Ascending aorta (tissue), 2 donors: ENCODE measurements at regions of chr11 and their contacts with region 1.

Region 1: DNA sequence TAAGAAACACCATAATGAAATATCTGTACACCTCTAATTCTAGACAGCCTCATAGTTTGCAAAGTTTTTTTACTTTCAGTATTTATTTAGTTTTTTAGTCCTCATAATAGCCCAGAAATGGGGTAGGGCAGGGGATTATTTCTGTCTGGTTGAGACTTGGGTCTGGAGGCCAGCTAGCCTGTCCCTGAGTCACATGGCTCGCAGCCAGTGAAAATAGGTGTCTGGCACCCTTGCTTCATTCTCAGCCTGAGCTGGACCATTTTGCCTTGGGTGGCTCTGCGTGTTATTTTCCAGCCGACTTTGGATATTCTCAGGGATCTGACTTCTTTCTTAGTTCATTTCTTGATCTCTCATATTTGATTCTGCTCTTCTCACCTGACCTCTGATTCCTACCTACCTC is 123.9 kb upstream of the NARS2 start:
- DNase-seq: peak; percentile 71 to 95
- H3K4me3 ChIP-seq: no peak overlapping the region
- H3K27ac ChIP-seq: peak overlapping the region; percentile 65 to 77
- H3K4me1 ChIP-seq: peaks cover 6 to 11% of the 10 kb centered on the region in 2 donors
- H3K27me3 ChIP-seq: no peaks in the 10 kb centered on the region
- CTCF ChIP-seq: no peak

Region 2: GRCh38 chr11:78731027-78731426 is 32.4 kb after region 1 on chr11:
- intact Hi-C with region 1: no loop called
- DNase-seq: no peak
- H3K4me3 ChIP-seq: no peak overlapping the region
- H3K27ac ChIP-seq: no peak overlapping the region
- H3K4me1 ChIP-seq: no peaks in the 10 kb centered on the region
- H3K27me3 ChIP-seq: no peaks in the 10 kb centered on the region
- CTCF ChIP-seq: no peak

Region 3: GRCh38 chr11:78801161-78801884 is 102.7 kb after region 1 on chr11:
- intact Hi-C with region 1: loop called (anchors 5 kb)
- DNase-seq: peak in 1 of 2 donors; percentile 83
- H3K4me3 ChIP-seq: no peak overlapping the region
- H3K27ac ChIP-seq: peak overlapping the region; percentile 69 to 75
- H3K4me1 ChIP-seq: peaks cover 19 to 30% of the 10 kb centered on the region in 2 donors
- H3K27me3 ChIP-seq: no peaks in the 10 kb centered on the region
- CTCF ChIP-seq: no peak

Region 4: GRCh38 chr11:80173371-80174136 is 1474.9 kb after region 1 on chr11:
- intact Hi-C with region 1: no loop called
- DNase-seq: no peak
- H3K4me3 ChIP-seq: no peak overlapping the region
- H3K27ac ChIP-seq: no peak overlapping the region
- H3K4me1 ChIP-seq: no peaks in the 10 kb centered on the region
- H3K27me3 ChIP-seq: no peaks in the 10 kb centered on the region
- CTCF ChIP-seq: no peak